ENCODE measurements at regions of chr1 and their contacts with region 1.

Region 1: GRCh38 chr1:230109895-230110667 is 43.0 kb downstream of the GALNT2 start:
- DNase-seq: peak; percentile 88
- H3K4me3 ChIP-seq: peak overlapping the region; percentile 25
- H3K27ac ChIP-seq: peak overlapping the region; percentile 79
- H3K4me1 ChIP-seq: peaks cover 80% of the 10 kb centered on the region
- CTCF ChIP-seq: peak; percentile 61

Region 2: GRCh38 chr1:229856009-229856650 is 254.0 kb before region 1 on chr1:
- CTCF ChIA-PET with region 1: no interaction called
- POLR2A ChIA-PET with region 1: interaction called, 3 read pairs
- intact Hi-C with region 1: loop called (anchors 5 kb)
- DNase-seq: peak; percentile 87
- H3K4me3 ChIP-seq: peak overlapping the region; percentile 56
- H3K27ac ChIP-seq: peak overlapping the region; percentile 65
- H3K4me1 ChIP-seq: peaks cover 15% of the 10 kb centered on the region
- CTCF ChIP-seq: no peak

Region 3: GRCh38 chr1:229972600-229973296 is 137.3 kb before region 1 on chr1:
- CTCF ChIA-PET with region 1: no interaction called
- POLR2A ChIA-PET with region 1: no interaction called
- intact Hi-C with region 1: no loop called
- DNase-seq: peak; percentile 10
- H3K4me3 ChIP-seq: no peak overlapping the region
- H3K27ac ChIP-seq: no peak overlapping the region
- H3K4me1 ChIP-seq: no peaks in the 10 kb centered on the region
- CTCF ChIP-seq: peak; percentile 64

Region 4: DNA sequence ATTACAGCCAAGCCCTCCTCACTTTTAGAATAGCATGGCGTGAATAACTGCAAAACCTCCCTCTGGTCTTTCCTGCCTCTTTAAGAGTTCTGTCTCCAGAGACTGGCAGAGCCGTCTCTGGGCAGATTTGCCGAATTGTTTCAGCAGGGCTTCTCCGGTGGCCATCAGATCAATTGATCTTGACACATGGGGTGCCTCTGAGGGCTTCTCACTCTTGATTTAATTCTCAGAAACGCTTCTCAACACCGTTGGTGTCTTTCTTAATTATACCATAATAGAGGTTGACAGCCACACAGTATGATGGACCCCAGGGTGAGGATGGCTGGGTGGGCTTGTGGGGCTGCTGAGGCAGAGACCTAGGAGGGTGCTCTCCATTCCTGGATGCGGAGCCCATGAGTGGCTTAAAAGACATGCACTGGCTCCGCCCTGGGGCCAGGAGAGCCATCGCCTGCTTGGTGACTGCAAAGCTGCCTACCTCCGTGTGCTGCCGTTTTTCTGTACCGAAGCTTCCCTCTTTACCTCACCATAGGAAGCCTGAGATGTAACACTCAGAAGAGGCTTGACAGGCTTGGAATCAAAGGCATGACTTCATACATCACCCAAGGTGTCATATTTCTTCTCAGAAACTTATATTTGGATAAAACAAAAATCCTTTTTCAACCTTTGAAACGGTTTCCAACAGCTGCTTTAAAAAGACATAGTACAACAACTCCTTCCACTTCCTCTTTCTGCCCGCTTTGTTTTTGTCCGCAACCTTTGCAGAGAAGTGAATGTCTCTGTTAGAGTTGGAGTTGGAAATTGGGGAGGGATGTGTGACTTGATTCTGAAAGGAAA is 39.9 kb after region 1 on chr1:
- CTCF ChIA-PET with region 1: interaction called, 5 read pairs
- POLR2A ChIA-PET with region 1: interaction called, 40 read pairs
- intact Hi-C with region 1: no loop called
- DNase-seq: peak; percentile 82
- H3K4me3 ChIP-seq: peak overlapping the region; percentile 59
- H3K27ac ChIP-seq: peak overlapping the region; percentile 95
- H3K4me1 ChIP-seq: peaks cover 68% of the 10 kb centered on the region
- CTCF ChIP-seq: peak; percentile 41; the same call in 1 of the 2 replicates

Region 5: GRCh38 chr1:230215031-230215430 is 105.0 kb after region 1 on chr1:
- CTCF ChIA-PET with region 1: no interaction called
- POLR2A ChIA-PET with region 1: no interaction called
- intact Hi-C with region 1: loop called (anchors 5 kb)
- DNase-seq: no peak
- H3K4me3 ChIP-seq: no peak overlapping the region
- H3K27ac ChIP-seq: no peak overlapping the region
- H3K4me1 ChIP-seq: peaks cover 27% of the 10 kb centered on the region
- CTCF ChIP-seq: 0 out of 2 replicates have a peak, but pooled peaks have one; percentile 9

Measured in OCI-LY7 (cell line).